ENCODE measurements at regions of chr2 and their contacts with region 1.

Region 1: DNA sequence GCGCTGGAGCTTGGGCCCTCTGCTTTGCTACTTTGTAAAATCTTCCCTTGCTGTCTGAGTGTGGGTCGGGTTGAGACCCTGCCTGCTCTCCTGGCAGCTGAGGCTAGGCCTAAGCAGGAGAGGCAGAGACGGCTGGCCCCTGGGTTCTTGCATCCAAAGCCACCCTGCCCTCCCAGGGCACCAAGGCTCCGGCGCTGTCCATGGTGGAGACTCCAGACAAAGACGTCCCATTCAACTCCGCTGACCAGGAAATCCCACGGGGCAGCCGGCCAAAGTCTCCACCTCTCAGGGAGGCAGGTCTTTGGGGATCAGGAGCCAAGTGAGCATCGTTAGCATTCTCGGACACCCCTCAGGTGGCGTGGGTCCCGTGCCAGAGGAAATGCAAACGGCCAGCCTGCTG is 2.6 kb upstream of the PRLH start:
- DNase-seq: no peak
- ATAC-seq: no peak
- H3K4me3 ChIP-seq: no peak overlapping the region
- H3K27ac ChIP-seq: no peak overlapping the region
- H3K4me1 ChIP-seq: peaks cover 9% of the 10 kb centered on the region
- H3K27me3 ChIP-seq: peaks cover 0 to 5% (median 0%) of the 10 kb centered on the region in 3 donors
- CTCF ChIP-seq: no peak

Region 2: GRCh38 chr2:237122214-237122666 is 441.6 kb before region 1 on chr2:
- intact Hi-C with region 1: loop called in 1 of 2 experiments (anchors 10 kb)
- DNase-seq: peak; percentile 69 to 87
- ATAC-seq: peak; percentile 78 to 90 (median 88)
- H3K4me3 ChIP-seq: no peak overlapping the region
- H3K27ac ChIP-seq: no peak overlapping the region
- H3K4me1 ChIP-seq: no peaks in the 10 kb centered on the region
- H3K27me3 ChIP-seq: no peaks in the 10 kb centered on the region
- CTCF ChIP-seq: peak; percentile 66

Region 3: DNA sequence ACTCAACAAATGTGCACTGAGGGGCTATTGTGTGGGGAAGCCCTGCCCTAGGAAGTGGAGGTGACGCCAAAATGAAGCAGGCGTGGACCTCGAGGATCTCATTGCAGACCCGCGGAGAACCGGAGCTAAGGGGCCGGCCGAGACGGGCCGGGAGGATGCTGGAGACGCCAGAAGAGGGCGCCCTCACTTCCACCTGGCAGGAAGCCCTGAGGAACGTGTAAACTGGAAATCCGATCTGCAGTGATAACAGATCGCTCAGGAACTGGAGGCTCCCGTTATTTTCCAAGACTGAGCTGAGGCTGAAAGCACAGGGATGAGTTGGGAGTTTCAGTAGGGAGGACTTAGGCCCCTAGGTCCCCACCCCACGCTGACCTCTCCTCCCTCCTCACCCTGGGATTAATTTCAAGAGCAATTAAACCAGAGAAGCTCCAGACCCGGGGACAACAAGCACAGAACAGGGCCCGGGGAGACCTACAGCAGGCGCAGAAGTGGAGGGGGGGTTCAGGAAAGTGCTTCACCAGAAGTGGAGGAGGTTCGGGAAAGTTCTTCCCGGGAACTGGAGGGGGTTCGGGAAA is 142.2 kb before region 1 on chr2:
- intact Hi-C with region 1: loop called in 1 of 2 experiments (anchors 5 kb)
- DNase-seq: peak; percentile 84 to 92
- ATAC-seq: peak; percentile 94 to 98 (median 95)
- H3K4me3 ChIP-seq: peak overlapping the region; percentile 40
- H3K27ac ChIP-seq: peak overlapping the region; percentile 31
- H3K4me1 ChIP-seq: peaks cover 14% of the 10 kb centered on the region
- H3K27me3 ChIP-seq: no peaks in the 10 kb centered on the region
- CTCF ChIP-seq: peak; percentile 82